B cell (primary cell): ENCODE measurements at regions of chr4 and their contacts with region 1.

Region 1: DNA sequence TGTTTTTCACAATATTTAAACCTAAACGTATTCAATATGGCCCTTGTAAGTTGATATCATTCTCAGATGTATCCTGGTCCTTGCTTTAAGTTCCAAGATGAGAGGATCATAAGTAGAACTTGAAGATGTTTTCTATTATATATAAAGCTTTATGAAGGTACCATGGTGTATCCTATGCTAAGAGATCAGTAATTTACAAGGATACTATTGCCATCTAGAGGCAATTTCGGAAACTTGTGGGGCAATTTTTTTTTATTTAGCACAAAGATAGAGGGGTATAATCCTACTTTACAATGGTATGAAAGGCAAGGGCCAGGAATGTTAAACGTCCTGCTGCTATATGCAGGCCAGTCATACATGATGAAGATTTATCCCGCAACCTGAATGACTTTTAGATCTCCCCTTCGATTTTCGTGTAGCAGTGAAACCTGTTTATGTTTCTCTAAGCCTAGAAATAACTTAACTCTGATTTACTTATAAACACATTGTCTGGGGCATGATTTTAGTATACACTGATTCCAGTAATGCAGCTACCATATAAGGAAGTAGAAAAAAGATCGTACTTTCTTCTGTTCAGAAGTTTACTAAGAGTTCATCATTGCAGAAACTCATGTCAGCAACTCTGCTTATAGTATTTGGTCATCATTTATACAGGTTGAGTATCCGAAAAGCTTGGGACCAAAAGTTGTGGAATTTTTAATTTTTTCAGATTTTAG is 2.6 kb downstream of the SLC25A31 start:
- DNase-seq: peak; percentile 8
- ATAC-seq: no peak
- H3K4me3 ChIP-seq: no peak overlapping the region
- H3K4me3 Mint-ChIP-seq: no peak overlapping the region
- H3K27ac ChIP-seq: no peak overlapping the region
- H3K27ac Mint-ChIP-seq: no peak overlapping the region
- H3K4me1 ChIP-seq: no peaks in the 10 kb centered on the region
- H3K4me1 Mint-ChIP-seq: no peaks in the 10 kb centered on the region
- H3K27me3 ChIP-seq: no peaks in the 10 kb centered on the region
- H3K27me3 Mint-ChIP-seq: peaks cover 10% of the 10 kb centered on the region
- CTCF ChIP-seq: peak; percentile 9

Region 2: DNA sequence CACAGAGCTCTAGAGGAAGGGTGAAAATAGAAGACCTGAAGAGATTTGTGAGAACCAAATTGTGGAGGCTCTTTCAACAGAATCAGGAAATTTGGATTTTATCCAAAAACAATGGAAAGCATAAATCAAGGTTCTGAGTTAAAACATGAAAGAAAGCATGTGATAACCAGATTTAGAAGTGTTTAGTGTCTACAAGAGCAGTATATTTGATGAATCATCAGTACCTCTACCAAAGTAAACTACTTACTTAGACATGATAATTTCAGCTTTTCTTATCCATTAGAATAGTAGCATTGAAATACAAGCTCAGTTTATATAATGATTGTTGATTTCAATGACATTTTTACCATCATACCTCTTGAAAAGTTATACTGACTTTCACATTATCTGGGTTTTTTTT is 125.9 kb before region 1 on chr4:
- CTCF ChIA-PET with region 1: interaction called, 4 read pairs
- POLR2A ChIA-PET with region 1: no interaction called
- intact Hi-C with region 1: loop called (anchors 1 kb)
- DNase-seq: no peak
- ATAC-seq: no peak
- H3K4me3 ChIP-seq: no peak overlapping the region
- H3K4me3 Mint-ChIP-seq: no peak overlapping the region
- H3K27ac ChIP-seq: no peak overlapping the region
- H3K27ac Mint-ChIP-seq: no peak overlapping the region
- H3K4me1 ChIP-seq: no peaks in the 10 kb centered on the region
- H3K4me1 Mint-ChIP-seq: no peaks in the 10 kb centered on the region
- H3K27me3 ChIP-seq: no peaks in the 10 kb centered on the region
- H3K27me3 Mint-ChIP-seq: peaks cover 11% of the 10 kb centered on the region
- CTCF ChIP-seq: no peak

Region 3: DNA sequence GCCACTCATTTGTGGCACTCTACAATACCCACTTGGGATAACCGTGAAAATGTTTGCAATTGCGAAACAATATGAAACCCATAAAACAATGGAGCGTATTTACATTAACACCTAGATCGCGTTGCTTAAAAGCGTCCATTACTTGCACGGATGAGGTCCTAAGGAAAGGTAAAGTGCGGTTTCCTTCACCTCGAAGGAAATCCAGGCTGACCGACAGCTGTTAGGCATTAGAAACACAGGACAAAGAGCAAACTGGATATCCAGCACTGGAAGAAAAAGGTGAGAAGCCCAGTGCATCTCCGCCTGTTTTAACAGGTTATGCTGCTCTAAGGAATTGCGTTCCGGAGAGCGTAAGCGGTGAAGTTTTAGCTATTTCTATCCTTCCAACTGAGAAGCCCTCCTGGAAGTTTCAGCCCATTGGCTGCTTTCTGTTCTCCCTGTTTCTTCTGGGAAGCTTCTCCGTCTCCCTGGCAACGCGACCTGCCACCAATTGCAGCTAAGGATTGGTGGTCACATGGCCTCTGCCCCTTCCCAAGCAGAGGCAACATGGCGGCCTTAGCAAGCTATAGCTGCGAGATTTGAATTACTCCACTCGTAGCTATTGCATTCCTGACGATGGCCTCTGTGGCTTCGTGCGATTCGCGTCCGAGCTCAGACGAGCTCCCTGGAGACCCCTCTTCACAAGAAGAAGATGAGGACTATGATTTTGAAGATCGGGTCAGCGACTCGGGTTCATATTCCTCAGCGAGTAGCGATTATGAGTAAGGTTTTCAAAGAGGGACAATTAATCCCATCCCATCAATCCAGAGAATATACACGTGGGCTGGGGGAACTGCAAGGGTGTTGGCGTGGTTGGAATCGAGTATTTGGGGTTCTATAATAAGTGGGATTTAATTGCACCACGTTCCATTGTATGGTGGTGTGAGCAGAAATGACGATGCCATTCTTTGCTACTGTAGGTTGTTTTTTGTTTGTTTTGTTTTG is 100.1 kb before region 1 on chr4 and contains the start of gene INTU:
- CTCF ChIA-PET with region 1: no interaction called
- POLR2A ChIA-PET with region 1: no interaction called
- intact Hi-C with region 1: no loop called
- DNase-seq: peak; percentile 31
- ATAC-seq: peak; percentile 21
- H3K4me3 ChIP-seq: peak within 1 kb of the TSS; percentile 31 to 86 (median 60)
- H3K4me3 Mint-ChIP-seq: peak within 1 kb of the TSS; percentile 81
- H3K27ac ChIP-seq: no peak within 1 kb of the TSS
- H3K27ac Mint-ChIP-seq: no peak within 1 kb of the TSS
- H3K4me1 ChIP-seq: peaks cover 0 to 12% of the 10 kb centered on the region in 2 donors
- H3K4me1 Mint-ChIP-seq: peaks cover 12% of the 10 kb centered on the region
- H3K27me3 ChIP-seq: peaks cover 0 to 16% (median 11%) of the 10 kb centered on the region in 4 experiments
- H3K27me3 Mint-ChIP-seq: peaks cover 55% of the 10 kb centered on the region
- CTCF ChIP-seq: no peak
- total RNA-seq, gene INTU: not detected in 2 replicates

Region 4: DNA sequence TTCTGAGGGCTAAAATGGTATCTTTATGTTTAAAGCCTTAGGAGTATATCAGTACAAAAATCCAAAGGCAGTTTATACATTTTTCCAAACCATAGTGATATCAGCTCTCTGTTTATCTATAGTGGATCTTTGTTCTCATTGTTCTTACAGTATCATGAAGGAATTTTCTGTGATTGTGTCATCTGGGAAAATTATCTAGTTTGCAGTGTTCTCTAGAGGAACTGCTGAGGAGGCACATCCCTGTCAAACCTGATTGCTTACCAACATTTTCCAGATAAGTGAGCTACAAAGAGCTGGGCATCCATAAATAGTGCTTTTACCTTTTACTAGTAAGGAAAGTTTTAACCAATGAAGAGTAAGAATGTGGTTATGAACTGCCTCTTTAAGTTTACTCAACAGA is 47.5 kb before region 1 on chr4:
- CTCF ChIA-PET with region 1: no interaction called
- POLR2A ChIA-PET with region 1: no interaction called
- intact Hi-C with region 1: no loop called
- DNase-seq: no peak
- ATAC-seq: no peak
- H3K4me3 ChIP-seq: no peak overlapping the region
- H3K4me3 Mint-ChIP-seq: no peak overlapping the region
- H3K27ac ChIP-seq: no peak overlapping the region
- H3K27ac Mint-ChIP-seq: no peak overlapping the region
- H3K4me1 ChIP-seq: no peaks in the 10 kb centered on the region
- H3K4me1 Mint-ChIP-seq: no peaks in the 10 kb centered on the region
- H3K27me3 ChIP-seq: no peaks in the 10 kb centered on the region
- H3K27me3 Mint-ChIP-seq: no peaks in the 10 kb centered on the region
- CTCF ChIP-seq: no peak

Region 5: GRCh38 chr4:127698789-127699200 is 34.0 kb before region 1 on chr4:
- CTCF ChIA-PET with region 1: no interaction called
- POLR2A ChIA-PET with region 1: no interaction called
- intact Hi-C with region 1: no loop called
- DNase-seq: no peak
- ATAC-seq: no peak
- H3K4me3 ChIP-seq: no peak overlapping the region
- H3K4me3 Mint-ChIP-seq: no peak overlapping the region
- H3K27ac ChIP-seq: no peak overlapping the region
- H3K27ac Mint-ChIP-seq: no peak overlapping the region
- H3K4me1 ChIP-seq: no peaks in the 10 kb centered on the region
- H3K4me1 Mint-ChIP-seq: no peaks in the 10 kb centered on the region
- H3K27me3 ChIP-seq: no peaks in the 10 kb centered on the region
- H3K27me3 Mint-ChIP-seq: peaks cover 12% of the 10 kb centered on the region
- CTCF ChIP-seq: no peak

Region 6: DNA sequence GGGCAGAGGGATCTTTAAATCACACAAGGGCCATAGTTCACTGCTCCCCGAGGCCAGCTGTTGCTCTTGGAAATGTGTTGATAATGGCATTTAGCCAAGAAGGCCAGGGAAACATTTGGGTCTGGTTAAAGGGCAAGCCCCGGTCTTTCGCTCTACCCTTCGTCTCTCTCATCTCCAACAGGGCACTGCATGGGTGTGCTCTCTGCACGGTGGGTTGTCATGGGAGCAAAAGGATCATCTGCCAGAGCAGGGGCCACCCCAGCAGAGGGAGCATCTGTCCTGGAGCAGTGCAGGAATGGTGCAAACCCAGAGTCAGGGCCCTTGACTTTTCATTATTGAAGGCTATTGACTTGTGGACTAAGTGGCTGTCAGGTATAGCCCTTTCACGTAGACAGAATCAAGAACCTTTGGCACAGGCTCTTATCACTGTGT is 577.5 kb after region 1 on chr4:
- CTCF ChIA-PET with region 1: no interaction called
- POLR2A ChIA-PET with region 1: no interaction called
- intact Hi-C with region 1: no loop called
- DNase-seq: no peak
- ATAC-seq: no peak
- H3K4me3 ChIP-seq: no peak overlapping the region
- H3K4me3 Mint-ChIP-seq: no peak overlapping the region
- H3K27ac ChIP-seq: no peak overlapping the region
- H3K27ac Mint-ChIP-seq: no peak overlapping the region
- H3K4me1 ChIP-seq: no peaks in the 10 kb centered on the region
- H3K4me1 Mint-ChIP-seq: no peaks in the 10 kb centered on the region
- H3K27me3 ChIP-seq: no peaks in the 10 kb centered on the region
- H3K27me3 Mint-ChIP-seq: no peaks in the 10 kb centered on the region
- CTCF ChIP-seq: no peak